A673 (cell line): ENCODE measurements at regions of chr20 and their contacts with region 1.

Region 1: GRCh38 chr20:2101865-2102584 is 398 bp downstream of the STK35 start:
- DNase-seq: peak; percentile 96
- H3K4me3 ChIP-seq: peak overlapping the region; percentile 93
- H3K27ac ChIP-seq: peak overlapping the region; percentile 100
- H3K4me1 ChIP-seq: peaks cover 23% of the 10 kb centered on the region
- H3K27me3 ChIP-seq: no peaks in the 10 kb centered on the region
- CTCF ChIP-seq: no peak

Region 2: GRCh38 chr20:1965520-1966351 is 136.3 kb before region 1 on chr20:
- CTCF ChIA-PET with region 1: no interaction called
- POLR2A ChIA-PET with region 1: no interaction called
- intact Hi-C with region 1: loop called (anchors 5 kb)
- DNase-seq: peak; percentile 90
- H3K4me3 ChIP-seq: no peak overlapping the region
- H3K27ac ChIP-seq: peak overlapping the region; percentile 42
- H3K4me1 ChIP-seq: peaks cover 24% of the 10 kb centered on the region
- H3K27me3 ChIP-seq: no peaks in the 10 kb centered on the region
- CTCF ChIP-seq: peak; percentile 99